ENCODE measurements at regions of chr11 and their contacts with region 1.

Region 1: DNA sequence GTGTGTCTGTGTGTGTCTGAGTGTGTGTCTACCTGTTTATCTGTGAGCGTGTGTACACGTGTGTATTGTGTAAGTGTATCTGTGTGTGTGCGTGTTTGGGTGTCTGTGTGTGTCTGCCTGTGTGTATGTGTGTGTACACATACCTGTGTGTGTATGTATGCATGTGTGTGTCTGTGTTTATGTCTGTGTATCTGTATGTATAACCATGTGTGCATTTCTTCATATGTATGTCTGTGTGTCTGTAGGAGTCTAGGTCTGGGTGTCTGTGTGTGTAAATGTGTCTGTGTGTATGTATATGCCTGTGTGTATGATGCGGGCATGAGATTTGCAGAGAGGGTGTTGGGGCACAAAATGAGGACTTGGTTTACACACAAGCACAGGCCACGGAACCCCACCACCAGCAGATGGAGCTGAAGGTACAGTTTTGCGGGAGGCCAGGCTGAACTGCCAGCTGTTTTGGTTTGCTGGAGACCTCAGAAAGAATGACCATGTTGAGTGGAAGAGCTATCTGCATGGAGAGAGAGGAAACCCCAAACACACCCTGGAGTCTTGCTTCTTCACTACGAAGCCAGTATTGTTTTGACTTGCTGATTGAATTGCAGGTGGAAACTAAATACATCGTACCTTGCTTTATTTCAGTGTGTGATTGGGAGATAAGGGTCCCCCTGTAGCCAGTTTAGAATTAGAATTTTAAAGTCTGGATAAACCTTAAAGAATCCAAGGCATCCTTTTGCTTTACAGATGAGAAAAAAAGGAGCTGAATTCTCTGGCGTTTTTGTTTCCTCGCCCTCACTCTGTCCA is 497.2 kb downstream of the NTM start:
- DNase-seq: peak; percentile 81
- H3K4me3 ChIP-seq: no peak overlapping the region
- H3K27ac ChIP-seq: no peak overlapping the region
- H3K27me3 ChIP-seq: no peaks in the 10 kb centered on the region
- CTCF ChIP-seq: peak; percentile 97

Region 2: GRCh38 chr11:131894615-131895544 is 27.2 kb after region 1 on chr11:
- CTCF ChIA-PET with region 1: interaction called, 13 read pairs
- POLR2A ChIA-PET with region 1: no interaction called
- DNase-seq: no peak
- H3K4me3 ChIP-seq: no peak overlapping the region
- H3K27ac ChIP-seq: no peak overlapping the region
- H3K27me3 ChIP-seq: no peaks in the 10 kb centered on the region
- CTCF ChIP-seq: no peak

Region 3: GRCh38 chr11:132028380-132029240 is 161.0 kb after region 1 on chr11:
- CTCF ChIA-PET with region 1: interaction called, 42 read pairs
- POLR2A ChIA-PET with region 1: no interaction called
- DNase-seq: no peak
- H3K4me3 ChIP-seq: no peak overlapping the region
- H3K27ac ChIP-seq: no peak overlapping the region
- H3K27me3 ChIP-seq: no peaks in the 10 kb centered on the region
- CTCF ChIP-seq: peak; percentile 75

Region 4: DNA sequence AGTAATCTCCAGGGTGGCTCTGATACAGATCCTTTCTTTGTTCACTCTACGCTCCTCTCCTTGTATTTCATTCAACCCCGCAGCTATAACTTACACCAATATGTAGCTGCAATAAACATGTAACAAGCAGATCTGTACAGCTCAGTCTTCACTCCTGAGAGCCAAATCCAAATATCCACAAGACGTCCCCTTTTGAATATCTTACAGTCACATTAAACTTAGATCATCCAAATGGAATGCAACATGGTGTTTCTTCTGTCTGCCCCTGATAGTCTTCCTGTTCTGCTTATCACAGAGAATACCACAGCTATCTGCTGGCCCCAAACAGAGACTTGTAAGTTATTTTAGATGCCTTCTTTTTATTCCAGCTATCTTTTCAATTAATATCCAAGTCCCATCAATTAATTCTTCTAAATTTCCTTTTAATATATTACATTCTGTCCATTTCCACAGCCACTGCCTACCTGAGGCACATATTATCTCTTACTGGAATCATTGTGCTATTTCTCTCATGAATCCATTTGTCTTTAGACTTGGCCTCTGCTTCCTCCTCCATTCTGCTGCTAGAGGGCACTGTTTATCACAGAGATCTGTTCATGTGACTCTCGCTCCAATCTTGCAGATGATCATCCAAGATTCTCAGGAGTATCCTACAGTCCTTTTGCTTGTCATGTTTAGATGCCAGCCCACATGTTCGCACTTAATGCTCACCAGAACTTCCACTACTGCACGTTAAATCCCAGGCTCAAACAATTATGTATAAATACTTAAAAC is 411.3 kb after region 1 on chr11:
- CTCF ChIA-PET with region 1: interaction called, 14 read pairs
- POLR2A ChIA-PET with region 1: no interaction called
- DNase-seq: peak; percentile 15
- H3K4me3 ChIP-seq: no peak overlapping the region
- H3K27ac ChIP-seq: no peak overlapping the region
- H3K27me3 ChIP-seq: no peaks in the 10 kb centered on the region
- CTCF ChIP-seq: peak; percentile 58

Region 5: GRCh38 chr11:132941024-132941646 is 1073.5 kb after region 1 on chr11:
- CTCF ChIA-PET with region 1: interaction called, 10 read pairs
- POLR2A ChIA-PET with region 1: no interaction called
- DNase-seq: peak; percentile 15
- H3K4me3 ChIP-seq: no peak overlapping the region
- H3K27ac ChIP-seq: no peak overlapping the region
- H3K27me3 ChIP-seq: peaks cover 7% of the 10 kb centered on the region
- CTCF ChIP-seq: peak; percentile 90

Measured in AG04450 (cell line).